H1 (cell line): ENCODE measurements at regions of chr1 and their contacts with region 1.

Region 1: GRCh38 chr1:147627435-147628110 is 42.8 kb downstream of the ACP6 start:
- DNase-seq: peak in 1 of 2 experiments; percentile 66
- H3K4me3 ChIP-seq: no peak overlapping the region
- H3K27ac ChIP-seq: no peak overlapping the region
- H3K4me1 ChIP-seq: peaks cover 0 to 1% (median 0%) of the 10 kb centered on the region in 4 experiments; a peak in 3 of 7 replicates
- H3K27me3 ChIP-seq: no peaks in the 10 kb centered on the region
- CTCF ChIP-seq: peak; percentile 82 to 91 (median 86)
- EP300 ChIP-seq: no peak
- POLR2A ChIP-seq: no peak
- RAD21 ChIP-seq: peak; percentile 73 to 76

Region 2: GRCh38 chr1:147504801-147505311 is 122.7 kb before region 1 on chr1:
- CTCF ChIA-PET with region 1: interaction called, 11 read pairs
- POLR2A ChIA-PET with region 1: interaction called, 3 read pairs
- DNase-seq: peak in 1 of 2 experiments; percentile 84
- H3K4me3 ChIP-seq: peak overlapping the region; percentile 1 to 49 (median 10); a peak in 5 of 8 replicates
- H3K27ac ChIP-seq: peak overlapping the region; percentile 74
- H3K4me1 ChIP-seq: peaks cover 7 to 22% (median 13%) of the 10 kb centered on the region in 4 experiments; a peak in 6 of 7 replicates
- H3K27me3 ChIP-seq: no peaks in the 10 kb centered on the region
- CTCF ChIP-seq: no peak
- EP300 ChIP-seq: no peak
- POLR2A ChIP-seq: peak in 1 of 2 experiments; percentile 64; a peak in 1 of 3 replicates
- RAD21 ChIP-seq: peak in 1 of 2 experiments; percentile 13; a peak in 1 of 4 replicates

Region 3: GRCh38 chr1:147515046-147515869 is 112.3 kb before region 1 on chr1:
- CTCF ChIA-PET with region 1: interaction called, 43 read pairs
- POLR2A ChIA-PET with region 1: no interaction called
- DNase-seq: no peak
- H3K4me3 ChIP-seq: no peak overlapping the region
- H3K27ac ChIP-seq: no peak overlapping the region
- H3K4me1 ChIP-seq: peaks cover 0 to 4% (median under 1%) of the 10 kb centered on the region in 4 experiments; a peak in 2 of 7 replicates
- H3K27me3 ChIP-seq: no peaks in the 10 kb centered on the region
- CTCF ChIP-seq: peak in 2 of 3 experiments; percentile 39 to 45; a peak in 3 of 4 replicates
- EP300 ChIP-seq: no peak
- POLR2A ChIP-seq: no peak
- RAD21 ChIP-seq: peak; percentile 75 to 76

Region 4: DNA sequence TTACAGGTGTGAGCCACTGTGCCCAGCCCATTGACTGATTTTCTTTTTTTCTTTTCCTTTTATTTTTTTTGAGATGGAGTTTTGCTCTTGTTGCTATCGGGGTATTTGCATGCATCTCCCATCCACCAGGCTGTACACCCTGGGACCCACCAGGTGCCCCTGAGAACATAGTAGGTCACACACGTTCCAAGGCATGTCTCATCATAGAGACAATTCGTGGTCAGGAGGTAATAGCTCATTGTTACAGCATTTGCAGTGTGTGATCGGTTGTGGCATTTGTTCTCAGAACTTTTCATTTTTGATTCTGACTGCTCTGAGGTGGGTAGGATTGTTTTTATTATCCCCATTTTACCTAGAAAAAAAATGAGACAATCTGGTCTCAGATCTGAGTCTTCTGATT is 56.7 kb before region 1 on chr1:
- CTCF ChIA-PET with region 1: no interaction called
- POLR2A ChIA-PET with region 1: no interaction called
- DNase-seq: no peak
- H3K4me3 ChIP-seq: no peak overlapping the region
- H3K27ac ChIP-seq: no peak overlapping the region
- H3K4me1 ChIP-seq: peaks cover 2 to 16% (median 6%) of the 10 kb centered on the region in 4 experiments; a peak in 4 of 7 replicates
- H3K27me3 ChIP-seq: no peaks in the 10 kb centered on the region
- CTCF ChIP-seq: no peak
- EP300 ChIP-seq: no peak
- POLR2A ChIP-seq: no peak
- RAD21 ChIP-seq: no peak

Region 5: GRCh38 chr1:147611021-147611426 is 16.5 kb before region 1 on chr1:
- CTCF ChIA-PET with region 1: interaction called, 21 read pairs
- POLR2A ChIA-PET with region 1: interaction called, 3 read pairs
- DNase-seq: no peak
- H3K4me3 ChIP-seq: no peak overlapping the region
- H3K27ac ChIP-seq: peak overlapping the region; percentile 8; the same call in 1 of the 2 replicates
- H3K4me1 ChIP-seq: peaks cover 0 to 8% (median 0%) of the 10 kb centered on the region in 4 experiments; a peak in 2 of 7 replicates
- H3K27me3 ChIP-seq: no peaks in the 10 kb centered on the region
- CTCF ChIP-seq: no peak
- EP300 ChIP-seq: no peak
- POLR2A ChIP-seq: no peak
- RAD21 ChIP-seq: no peak

Region 6: DNA sequence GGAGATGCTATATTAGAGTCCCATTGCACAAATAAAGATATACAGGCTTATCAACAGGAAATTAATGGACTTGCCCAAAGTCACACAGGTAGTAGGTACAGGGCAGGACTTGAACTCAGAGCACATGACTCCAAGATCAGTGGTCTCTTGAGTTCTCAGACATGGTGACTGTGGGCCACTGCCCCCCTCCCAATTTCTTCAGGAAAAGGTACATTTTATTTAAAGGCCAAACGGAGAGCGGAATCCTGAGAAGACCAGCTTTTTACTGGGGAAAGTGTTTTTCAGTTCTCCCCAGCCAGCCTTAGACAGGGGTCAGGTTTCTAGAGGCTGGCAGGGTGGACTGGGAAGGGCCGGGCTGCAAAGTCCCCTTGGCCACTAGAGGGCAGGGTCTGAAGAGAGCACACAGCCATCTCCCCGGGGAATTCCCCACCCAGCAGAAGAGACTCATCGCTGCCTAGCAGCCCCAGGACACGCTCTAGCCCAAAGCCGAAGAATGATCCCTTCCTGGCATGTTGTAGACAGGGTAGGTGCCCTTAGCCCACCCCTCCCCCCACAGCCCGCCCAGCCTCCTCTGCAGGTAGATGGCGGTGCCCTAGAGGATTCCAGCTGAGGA is 13.1 kb after region 1 on chr1:
- CTCF ChIA-PET with region 1: interaction called, 13 read pairs
- POLR2A ChIA-PET with region 1: no interaction called
- DNase-seq: peak; percentile 77 to 91
- H3K4me3 ChIP-seq: no peak overlapping the region
- H3K27ac ChIP-seq: no peak overlapping the region
- H3K4me1 ChIP-seq: no peaks in the 10 kb centered on the region; a peak in 1 of 7 replicates
- H3K27me3 ChIP-seq: no peaks in the 10 kb centered on the region
- CTCF ChIP-seq: peak; percentile 84 to 93 (median 93)
- EP300 ChIP-seq: 0 out of 3 replicates have a peak, but pooled peaks of 1 of the 2 experiments have one; percentile 40
- POLR2A ChIP-seq: no peak
- RAD21 ChIP-seq: peak; percentile 65 to 71

Region 7: GRCh38 chr1:147654549-147654948 is 27.0 kb after region 1 on chr1:
- CTCF ChIA-PET with region 1: no interaction called
- POLR2A ChIA-PET with region 1: no interaction called
- DNase-seq: no peak
- H3K4me3 ChIP-seq: no peak overlapping the region
- H3K27ac ChIP-seq: no peak overlapping the region
- H3K4me1 ChIP-seq: no peaks in the 10 kb centered on the region
- H3K27me3 ChIP-seq: no peaks in the 10 kb centered on the region; a peak in 1 of 7 replicates
- CTCF ChIP-seq: no peak
- EP300 ChIP-seq: no peak
- POLR2A ChIP-seq: no peak
- RAD21 ChIP-seq: no peak

Region 8: GRCh38 chr1:147748676-147749350 is 121.2 kb after region 1 on chr1:
- CTCF ChIA-PET with region 1: no interaction called
- POLR2A ChIA-PET with region 1: no interaction called
- DNase-seq: peak in 1 of 2 experiments; percentile 23
- H3K4me3 ChIP-seq: no peak overlapping the region
- H3K27ac ChIP-seq: no peak overlapping the region
- H3K4me1 ChIP-seq: no peaks in the 10 kb centered on the region
- H3K27me3 ChIP-seq: no peaks in the 10 kb centered on the region
- CTCF ChIP-seq: no peak
- EP300 ChIP-seq: no peak
- POLR2A ChIP-seq: no peak
- RAD21 ChIP-seq: no peak